Activated CD4-positive, alpha-beta memory T cell treated with anti-CD3 and anti-CD28 coated beads, Interleukin-2, amount 10 ng/mL, durations not matched to agents 7 days and 5 days (primary cell): ENCODE measurements at regions of chr1 and their contacts with region 1.

Region 1: GRCh38 chr1:44721485-44722361 is 9.2 kb downstream of the RNU5D-1 start:
- DNase-seq: peak; percentile 87
- H3K4me3 Mint-ChIP-seq: peak overlapping the region; percentile 52
- H3K27ac Mint-ChIP-seq: peak overlapping the region; percentile 94
- H3K4me1 Mint-ChIP-seq: peaks cover 71% of the 10 kb centered on the region
- H3K27me3 Mint-ChIP-seq: no peaks in the 10 kb centered on the region

Region 2: DNA sequence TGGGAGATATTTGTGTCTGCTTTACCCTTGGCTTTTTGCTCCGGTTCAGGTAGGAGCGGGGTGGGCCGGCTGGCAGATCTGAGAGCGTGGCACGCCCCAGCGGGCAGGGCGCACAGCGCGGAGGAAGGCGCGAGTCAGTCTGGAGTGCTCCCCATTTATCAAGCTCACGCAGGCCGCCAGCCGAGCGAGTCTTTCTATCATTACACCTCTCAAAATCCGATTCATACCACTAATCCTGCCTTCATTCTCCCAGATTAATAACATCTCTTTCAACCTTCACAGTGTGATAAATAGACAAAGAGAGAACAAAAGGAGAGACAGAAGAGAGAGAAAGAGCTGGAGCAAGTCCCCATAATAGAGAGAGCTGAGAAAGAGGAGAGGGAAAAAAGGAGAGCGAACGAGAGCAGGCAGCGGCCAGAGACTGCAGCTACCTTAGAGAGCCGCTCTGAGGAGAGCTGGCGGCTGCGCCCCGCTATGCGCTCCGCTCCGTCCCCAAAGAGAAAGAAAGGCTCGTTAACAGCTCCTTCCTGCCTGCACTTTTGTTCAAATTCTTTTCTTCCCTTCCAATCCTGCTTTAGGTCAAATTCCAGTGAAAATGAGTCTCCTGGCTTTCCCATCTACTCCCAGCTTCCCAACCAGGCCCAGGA is 460.4 kb before region 1 on chr1:
- CTCF ChIA-PET with region 1: no interaction called
- POLR2A ChIA-PET with region 1: no interaction called
- DNase-seq: no peak
- H3K4me3 Mint-ChIP-seq: no peak overlapping the region
- H3K27ac Mint-ChIP-seq: no peak overlapping the region
- H3K4me1 Mint-ChIP-seq: peaks cover 9% of the 10 kb centered on the region
- H3K27me3 Mint-ChIP-seq: no peaks in the 10 kb centered on the region

Region 3: GRCh38 chr1:44631647-44632539 is 89.8 kb before region 1 on chr1:
- CTCF ChIA-PET with region 1: interaction called, 3 read pairs
- POLR2A ChIA-PET with region 1: interaction called, 52 read pairs
- DNase-seq: peak; percentile 93
- H3K4me3 Mint-ChIP-seq: peak overlapping the region; percentile 90
- H3K27ac Mint-ChIP-seq: peak overlapping the region; percentile 93
- H3K4me1 Mint-ChIP-seq: peaks cover 40% of the 10 kb centered on the region
- H3K27me3 Mint-ChIP-seq: no peaks in the 10 kb centered on the region

Region 4: DNA sequence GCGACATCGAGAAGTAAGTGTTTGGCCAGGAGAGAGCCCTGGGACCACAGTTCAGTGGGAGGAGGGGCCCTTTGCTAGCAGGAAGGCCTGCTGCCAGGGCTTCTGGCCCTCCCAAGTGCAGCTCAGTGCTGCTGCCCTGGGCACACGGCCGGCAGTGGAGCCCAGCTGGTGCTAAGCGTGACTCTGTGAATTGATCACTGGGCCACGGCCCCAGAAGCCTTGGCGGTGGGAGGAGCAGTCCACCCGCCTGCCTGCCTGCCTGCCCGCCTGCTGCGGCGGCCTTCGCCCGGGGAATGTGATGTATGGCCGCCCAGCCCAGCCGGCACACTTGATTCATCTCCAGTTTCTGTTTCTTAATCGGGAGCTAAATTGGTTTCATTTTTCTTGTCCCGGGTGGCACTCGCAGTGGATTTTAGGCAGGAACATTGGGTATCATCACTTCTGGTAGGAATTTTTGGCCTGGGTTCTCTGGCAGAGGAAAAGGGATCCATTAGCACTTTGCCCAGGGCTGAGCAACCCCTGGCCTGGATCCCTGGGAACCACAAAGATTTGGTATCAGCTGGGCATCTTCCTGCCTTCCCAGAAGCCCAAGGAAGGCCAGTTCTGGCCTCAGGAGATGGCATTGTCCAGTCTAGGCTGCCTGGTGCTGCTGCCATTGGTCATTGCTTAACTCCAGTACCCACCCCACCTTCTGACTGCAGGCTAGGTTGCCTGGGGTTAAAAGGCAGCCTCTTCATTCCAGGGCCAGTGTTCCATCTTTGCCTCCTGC is 76.1 kb before region 1 on chr1:
- CTCF ChIA-PET with region 1: no interaction called
- POLR2A ChIA-PET with region 1: no interaction called
- DNase-seq: no peak
- H3K4me3 Mint-ChIP-seq: no peak overlapping the region
- H3K27ac Mint-ChIP-seq: no peak overlapping the region
- H3K4me1 Mint-ChIP-seq: no peaks in the 10 kb centered on the region
- H3K27me3 Mint-ChIP-seq: no peaks in the 10 kb centered on the region

Region 5: GRCh38 chr1:44707959-44708831 is 13.5 kb before region 1 on chr1:
- CTCF ChIA-PET with region 1: interaction called, 3 read pairs
- POLR2A ChIA-PET with region 1: interaction called, 45 read pairs
- DNase-seq: no peak
- H3K4me3 Mint-ChIP-seq: peak overlapping the region; percentile 5
- H3K27ac Mint-ChIP-seq: no peak overlapping the region
- H3K4me1 Mint-ChIP-seq: peaks cover 14% of the 10 kb centered on the region
- H3K27me3 Mint-ChIP-seq: peaks cover 17% of the 10 kb centered on the region

Region 6: GRCh38 chr1:44799770-44800584 is 78.3 kb after region 1 on chr1 and contains the start of gene PLK3:
- CTCF ChIA-PET with region 1: interaction called, 6 read pairs
- POLR2A ChIA-PET with region 1: interaction called, 65 read pairs
- DNase-seq: peak; percentile 98
- H3K4me3 Mint-ChIP-seq: peak within 1 kb of the TSS; percentile 90
- H3K27ac Mint-ChIP-seq: peak within 1 kb of the TSS; percentile 98
- H3K4me1 Mint-ChIP-seq: peaks cover 47% of the 10 kb centered on the region
- H3K27me3 Mint-ChIP-seq: no peaks in the 10 kb centered on the region
- total RNA-seq, gene PLK3: 62.8 to 63.5 TPM

Region 7: DNA sequence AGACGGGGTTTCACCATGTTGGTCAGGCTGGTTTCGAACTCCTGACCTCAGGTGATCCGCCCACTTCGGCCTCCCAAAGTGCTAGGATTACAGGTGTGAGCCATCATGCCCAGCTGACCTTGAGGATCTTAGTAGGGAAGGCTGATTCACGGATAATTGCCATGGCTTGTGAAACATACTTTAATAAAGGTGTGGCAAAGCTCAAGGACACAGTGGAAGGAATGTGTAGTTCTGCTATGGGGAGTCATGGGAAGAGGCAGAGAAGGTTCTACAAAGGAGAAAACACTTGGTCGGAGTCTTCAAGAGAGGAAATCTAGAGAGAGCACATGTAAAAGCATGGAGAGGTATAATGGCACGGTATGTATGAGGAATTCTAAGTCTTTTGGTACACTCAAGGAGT is 134.0 kb after region 1 on chr1:
- CTCF ChIA-PET with region 1: no interaction called
- POLR2A ChIA-PET with region 1: no interaction called
- DNase-seq: no peak
- H3K4me3 Mint-ChIP-seq: no peak overlapping the region
- H3K27ac Mint-ChIP-seq: no peak overlapping the region
- H3K4me1 Mint-ChIP-seq: no peaks in the 10 kb centered on the region
- H3K27me3 Mint-ChIP-seq: no peaks in the 10 kb centered on the region

Region 8: DNA sequence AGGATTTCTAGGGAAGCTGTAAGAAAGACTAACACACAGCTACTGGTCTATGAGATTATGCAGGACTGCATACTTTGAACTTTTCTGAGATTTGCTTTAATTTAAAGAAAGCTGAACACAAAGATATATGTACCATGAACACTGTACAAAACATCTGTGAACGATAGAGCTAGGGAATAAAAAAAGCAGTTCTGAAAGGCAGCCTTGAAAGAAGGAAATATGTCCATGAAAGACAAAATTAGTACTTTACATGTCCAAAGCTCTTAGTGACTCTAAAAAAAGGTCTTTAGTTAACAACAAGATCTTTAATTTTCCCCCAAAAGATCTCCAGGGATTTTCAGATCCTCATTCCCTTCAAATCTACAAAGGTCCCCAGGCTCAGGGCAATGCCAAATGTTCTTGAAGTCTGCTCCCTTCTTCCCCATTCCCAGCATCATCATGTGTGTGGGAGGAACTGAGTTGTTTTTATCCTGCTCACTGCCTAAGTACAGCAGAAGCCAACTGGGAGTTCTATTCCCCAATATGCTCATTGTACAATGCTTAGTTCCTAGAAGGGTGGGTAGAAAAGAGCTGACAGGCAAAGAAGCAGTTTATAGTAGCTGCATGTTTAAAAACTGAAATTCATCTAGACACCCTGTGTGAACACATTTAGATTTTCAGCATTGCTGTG is 181.4 kb after region 1 on chr1:
- CTCF ChIA-PET with region 1: no interaction called
- POLR2A ChIA-PET with region 1: no interaction called
- DNase-seq: no peak
- H3K4me3 Mint-ChIP-seq: no peak overlapping the region
- H3K27ac Mint-ChIP-seq: no peak overlapping the region
- H3K4me1 Mint-ChIP-seq: no peaks in the 10 kb centered on the region
- H3K27me3 Mint-ChIP-seq: no peaks in the 10 kb centered on the region

Region 9: DNA sequence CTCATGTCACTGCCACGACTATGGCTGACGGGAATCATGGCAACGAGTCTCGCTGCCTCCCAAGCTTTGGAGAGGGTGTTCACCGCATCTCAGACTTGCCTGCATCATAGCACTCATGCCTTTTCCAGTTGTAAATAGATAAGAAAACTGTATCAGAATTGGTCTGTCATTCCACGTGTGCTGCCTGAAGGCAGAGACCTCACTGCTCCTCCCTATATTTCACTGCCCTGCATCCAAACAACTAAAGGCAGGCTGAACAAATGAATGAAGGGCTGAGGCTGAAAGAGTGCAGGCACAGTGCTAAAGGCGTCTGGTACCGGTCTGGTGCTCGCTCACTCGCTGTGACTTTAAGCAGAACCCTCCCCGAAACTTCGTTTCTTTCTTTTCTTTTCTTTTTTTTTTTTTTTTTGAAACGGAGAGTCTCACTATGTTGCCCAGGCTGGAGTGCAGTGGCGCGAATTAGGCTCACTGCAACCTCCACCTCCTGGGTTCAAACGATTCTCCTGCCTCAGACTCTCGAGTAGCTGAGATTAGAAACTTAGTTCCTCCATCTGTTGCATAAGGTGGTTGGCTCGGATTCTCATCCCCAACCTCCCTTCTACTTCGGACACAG is 264.1 kb after region 1 on chr1:
- CTCF ChIA-PET with region 1: no interaction called
- POLR2A ChIA-PET with region 1: interaction called, 25 read pairs
- DNase-seq: no peak
- H3K4me3 Mint-ChIP-seq: peak overlapping the region; percentile 90
- H3K27ac Mint-ChIP-seq: peak overlapping the region; percentile 86
- H3K4me1 Mint-ChIP-seq: peaks cover 28% of the 10 kb centered on the region
- H3K27me3 Mint-ChIP-seq: peaks cover 2% of the 10 kb centered on the region

Region 10: DNA sequence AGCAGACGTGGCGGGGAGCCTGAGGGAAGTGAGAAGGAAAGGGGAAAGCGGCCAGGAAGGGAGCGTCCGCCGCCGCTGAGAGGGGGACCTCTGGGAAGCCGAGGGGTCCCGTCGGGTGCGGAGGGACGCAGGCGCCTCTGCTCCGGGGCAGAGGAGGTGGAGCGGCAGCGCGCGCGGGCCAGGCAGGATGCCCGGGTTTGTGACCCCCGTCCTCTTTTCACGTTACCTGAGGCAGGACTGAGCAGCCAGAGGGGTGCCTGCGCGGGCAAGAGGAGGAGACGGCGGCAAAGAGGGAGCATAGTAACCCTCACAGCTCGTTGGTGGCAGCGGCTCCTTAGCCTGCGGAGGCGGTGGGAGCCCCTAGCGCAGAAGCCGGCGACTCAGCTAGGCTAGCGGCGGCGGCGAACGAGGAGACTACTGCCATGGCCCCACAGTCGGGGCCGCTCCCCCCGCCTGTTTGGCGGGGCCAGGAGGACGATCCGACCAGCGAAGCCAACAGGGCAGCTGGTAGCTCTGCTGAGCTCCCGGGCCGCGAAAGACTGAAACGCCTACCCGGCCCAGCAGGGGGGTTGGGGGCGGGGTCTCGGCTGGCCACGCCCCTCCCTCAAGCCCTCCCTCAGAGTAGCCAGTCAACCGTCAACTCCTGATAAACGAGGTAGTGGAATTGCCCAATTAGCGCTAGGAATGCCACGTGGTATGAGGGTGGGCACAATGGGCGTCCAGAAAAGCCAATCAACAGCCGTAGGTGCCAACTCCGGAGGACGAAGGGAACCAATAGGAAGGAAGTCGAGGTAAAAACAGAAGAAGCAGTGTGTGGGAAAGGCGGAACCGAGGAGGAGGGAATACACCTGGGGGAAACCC is 769.1 kb after region 1 on chr1 and contains the start of gene TESK2:
- CTCF ChIA-PET with region 1: no interaction called
- POLR2A ChIA-PET with region 1: interaction called, 15 read pairs
- DNase-seq: peak; percentile 98
- H3K4me3 Mint-ChIP-seq: no peak within 1 kb of the TSS
- H3K27ac Mint-ChIP-seq: no peak within 1 kb of the TSS
- H3K4me1 Mint-ChIP-seq: peaks cover 7% of the 10 kb centered on the region
- H3K27me3 Mint-ChIP-seq: peaks cover 7% of the 10 kb centered on the region
- total RNA-seq, gene TESK2: 3.7 to 4.3 TPM